Activated CD4-positive, alpha-beta memory T cell treated with anti-CD3 and anti-CD28 coated beads for 36 hours (primary cell): ENCODE measurements at regions of chr3 and their contacts with region 1.

Region 1: GRCh38 chr3:4290272-4290893 is 12.8 kb upstream of the SETMAR start:
- DNase-seq: peak; percentile 31
- H3K4me3 Mint-ChIP-seq: no peak overlapping the region
- H3K27ac Mint-ChIP-seq: no peak overlapping the region
- H3K4me1 Mint-ChIP-seq: peaks cover 7% of the 10 kb centered on the region
- H3K27me3 Mint-ChIP-seq: peaks cover 6% of the 10 kb centered on the region

Region 2: DNA sequence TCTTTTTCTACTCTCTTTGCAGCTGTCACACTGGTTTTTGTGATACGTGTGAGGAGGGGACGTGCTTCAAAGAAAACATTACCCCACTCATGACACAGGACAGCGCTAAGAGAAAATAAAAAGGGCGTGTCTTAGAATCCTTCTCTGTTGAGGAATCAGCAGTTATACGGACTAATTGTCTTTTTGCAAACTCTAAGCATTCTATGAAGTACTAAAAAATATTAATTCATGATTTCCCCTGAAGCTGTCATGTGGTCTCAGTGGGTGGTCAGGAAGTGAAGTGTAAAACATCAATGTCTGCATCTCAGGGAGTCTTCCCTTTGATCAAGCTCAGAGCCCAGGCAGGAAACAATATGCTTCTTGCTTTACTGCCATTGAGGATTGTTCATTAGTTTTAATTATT is 993.4 kb before region 1 on chr3:
- CTCF ChIA-PET with region 1: no interaction called
- POLR2A ChIA-PET with region 1: no interaction called
- intact Hi-C with region 1: no loop called
- DNase-seq: no peak
- H3K4me3 Mint-ChIP-seq: no peak overlapping the region
- H3K27ac Mint-ChIP-seq: no peak overlapping the region
- H3K4me1 Mint-ChIP-seq: peaks cover 11% of the 10 kb centered on the region
- H3K27me3 Mint-ChIP-seq: peaks cover 6% of the 10 kb centered on the region

Region 3: GRCh38 chr3:3683261-3683660 is 607.1 kb before region 1 on chr3:
- CTCF ChIA-PET with region 1: no interaction called
- POLR2A ChIA-PET with region 1: no interaction called
- intact Hi-C with region 1: no loop called
- DNase-seq: no peak
- H3K4me3 Mint-ChIP-seq: no peak overlapping the region
- H3K27ac Mint-ChIP-seq: no peak overlapping the region
- H3K4me1 Mint-ChIP-seq: no peaks in the 10 kb centered on the region
- H3K27me3 Mint-ChIP-seq: no peaks in the 10 kb centered on the region

Region 4: GRCh38 chr3:4006288-4006687 is 284.1 kb before region 1 on chr3:
- CTCF ChIA-PET with region 1: no interaction called
- POLR2A ChIA-PET with region 1: no interaction called
- intact Hi-C with region 1: loop called (anchors 10 kb)
- DNase-seq: no peak
- H3K4me3 Mint-ChIP-seq: no peak overlapping the region
- H3K27ac Mint-ChIP-seq: no peak overlapping the region
- H3K4me1 Mint-ChIP-seq: no peaks in the 10 kb centered on the region
- H3K27me3 Mint-ChIP-seq: no peaks in the 10 kb centered on the region

Region 5: DNA sequence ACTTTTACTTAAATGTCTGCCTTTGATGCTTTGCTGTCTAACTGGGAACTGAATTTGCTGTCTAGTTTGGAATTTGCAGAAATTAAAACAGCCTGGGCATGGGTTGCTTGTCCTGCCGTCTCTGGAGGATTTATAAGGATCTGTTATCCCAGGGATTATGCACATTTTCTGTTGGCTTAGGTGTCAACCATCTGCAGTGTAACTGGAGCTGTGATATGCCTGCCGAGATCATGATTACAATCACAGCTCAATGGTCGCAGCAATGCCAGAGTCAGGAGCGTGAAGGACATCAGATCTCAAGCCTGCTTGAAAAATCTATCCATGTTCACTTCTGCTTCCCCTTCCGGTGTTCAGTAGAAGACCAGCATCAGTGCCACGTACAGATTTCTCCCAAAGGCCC is 29.0 kb before region 1 on chr3:
- CTCF ChIA-PET with region 1: no interaction called
- POLR2A ChIA-PET with region 1: no interaction called
- intact Hi-C with region 1: no loop called
- DNase-seq: no peak
- H3K4me3 Mint-ChIP-seq: no peak overlapping the region
- H3K27ac Mint-ChIP-seq: no peak overlapping the region
- H3K4me1 Mint-ChIP-seq: no peaks in the 10 kb centered on the region
- H3K27me3 Mint-ChIP-seq: no peaks in the 10 kb centered on the region

Region 6: GRCh38 chr3:4888913-4889846 is 598.8 kb after region 1 on chr3:
- CTCF ChIA-PET with region 1: no interaction called
- POLR2A ChIA-PET with region 1: no interaction called
- intact Hi-C with region 1: no loop called
- DNase-seq: peak; percentile 67
- H3K4me3 Mint-ChIP-seq: no peak overlapping the region
- H3K27ac Mint-ChIP-seq: peak overlapping the region; percentile 90
- H3K4me1 Mint-ChIP-seq: peaks cover 31% of the 10 kb centered on the region
- H3K27me3 Mint-ChIP-seq: no peaks in the 10 kb centered on the region